Ascending aorta (tissue), 2 donors: ENCODE measurements at regions of chr22 and their contacts with region 1.

Region 1: GRCh38 chr22:29306175-29306834 is at the start of gene GAS2L1:
- DNase-seq: peak in 1 of 2 donors; percentile 90
- H3K4me3 ChIP-seq: peak within 1 kb of the TSS; percentile 80 to 99
- H3K27ac ChIP-seq: peak within 1 kb of the TSS; percentile 83 to 87
- H3K4me1 ChIP-seq: peaks cover 26 to 48% of the 10 kb centered on the region in 2 donors
- H3K27me3 ChIP-seq: no peaks in the 10 kb centered on the region
- CTCF ChIP-seq: peak; percentile 69 to 77 (median 74)
- total RNA-seq, gene GAS2L1: 99.3 TPM

Region 2: DNA sequence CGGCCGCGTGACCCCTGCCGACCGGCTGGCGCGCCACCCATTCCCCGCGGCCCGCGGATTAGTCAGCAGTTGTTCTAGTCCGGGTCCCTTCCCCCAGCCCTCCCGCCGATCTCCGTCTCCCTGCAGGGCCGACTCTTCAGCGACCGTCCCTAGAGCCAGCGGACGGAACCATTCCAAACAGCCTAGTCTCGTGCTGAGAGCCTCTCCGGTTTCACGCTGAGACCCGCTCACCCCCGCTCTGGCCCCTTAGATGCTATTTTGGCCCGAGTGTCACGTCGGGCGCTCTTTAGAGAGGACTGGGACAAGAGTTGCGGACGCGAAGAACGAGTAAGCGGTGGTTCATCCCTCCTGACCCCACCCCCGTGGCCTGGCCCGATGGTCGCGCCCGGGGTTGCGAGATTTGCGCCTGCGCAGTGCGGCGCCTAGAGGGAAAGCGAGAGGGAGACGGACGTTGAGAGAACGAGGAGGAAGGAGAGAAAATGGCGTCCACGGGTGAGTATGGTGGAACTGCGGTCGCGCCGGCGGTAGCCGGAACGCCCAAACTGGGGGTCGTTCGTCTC is 38.4 kb before region 1 on chr22 and contains the starts of genes EWSR1 and RHBDD3:
- intact Hi-C with region 1: loop called (anchors 1 kb)
- DNase-seq: peak; percentile 88 to 97
- H3K4me3 ChIP-seq: peak within 1 kb of the TSS; percentile 76 to 98
- H3K27ac ChIP-seq: peak within 1 kb of the TSS; percentile 96 to 99
- H3K4me1 ChIP-seq: peaks cover 6 to 46% of the 10 kb centered on the region in 2 donors
- H3K27me3 ChIP-seq: no peaks in the 10 kb centered on the region
- CTCF ChIP-seq: no peak
- total RNA-seq, gene EWSR1: 133 TPM
- total RNA-seq, gene RHBDD3: 254 TPM

Region 3: DNA sequence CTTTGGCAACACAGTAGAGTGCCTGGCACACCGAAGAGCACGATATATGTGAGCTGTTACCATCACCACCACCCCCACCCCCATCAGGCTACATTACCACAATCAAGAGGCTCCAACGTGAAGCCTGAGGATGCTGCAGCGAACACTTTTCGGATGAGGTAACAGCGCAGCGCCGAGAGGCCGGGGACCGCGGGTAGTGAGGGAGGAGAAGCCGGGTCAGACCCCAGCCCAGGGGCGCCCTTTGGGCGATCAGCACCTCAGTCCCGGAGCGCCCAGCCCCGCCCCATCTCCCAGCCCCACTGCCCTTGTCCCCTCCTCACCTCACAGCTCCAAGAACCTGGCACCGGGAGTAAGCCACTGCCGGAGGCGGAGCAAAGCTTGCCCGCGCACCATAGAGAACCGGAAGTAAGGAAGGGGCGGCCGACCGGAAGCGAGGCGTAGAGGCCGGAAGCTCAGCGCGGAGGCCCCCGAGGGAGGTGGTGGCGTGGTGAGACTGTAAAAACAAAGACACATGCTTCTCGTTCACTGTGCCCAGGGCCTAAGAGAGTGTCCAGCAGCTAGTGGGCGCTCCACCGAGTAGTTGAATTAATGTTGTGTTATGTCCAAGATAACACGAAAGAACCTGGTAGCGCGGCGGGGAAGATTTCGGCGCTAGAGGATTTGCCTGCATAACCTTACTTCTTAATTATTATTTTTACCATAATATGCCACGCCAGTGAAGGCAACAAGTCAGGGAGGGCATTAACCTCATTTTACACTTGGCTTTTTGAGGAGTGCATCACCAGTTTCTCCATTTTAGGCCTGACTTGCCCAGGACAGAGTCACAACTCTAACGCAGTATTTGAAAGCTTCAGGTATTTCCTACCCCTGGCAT is 247.3 kb after region 1 on chr22 and contains the start of gene THOC5:
- intact Hi-C with region 1: loop called (anchors 1 kb)
- DNase-seq: peak; percentile 74 to 95
- H3K4me3 ChIP-seq: peak within 1 kb of the TSS; percentile 74 to 82
- H3K27ac ChIP-seq: peak within 1 kb of the TSS; percentile 84 to 85
- H3K4me1 ChIP-seq: peaks cover 4 to 7% of the 10 kb centered on the region in 2 donors
- H3K27me3 ChIP-seq: no peaks in the 10 kb centered on the region
- CTCF ChIP-seq: peak; percentile 56 to 75 (median 74)
- total RNA-seq, gene THOC5: 21.5 TPM